ENCODE measurements at regions of chr5 and their contacts with region 1.

Region 1: DNA sequence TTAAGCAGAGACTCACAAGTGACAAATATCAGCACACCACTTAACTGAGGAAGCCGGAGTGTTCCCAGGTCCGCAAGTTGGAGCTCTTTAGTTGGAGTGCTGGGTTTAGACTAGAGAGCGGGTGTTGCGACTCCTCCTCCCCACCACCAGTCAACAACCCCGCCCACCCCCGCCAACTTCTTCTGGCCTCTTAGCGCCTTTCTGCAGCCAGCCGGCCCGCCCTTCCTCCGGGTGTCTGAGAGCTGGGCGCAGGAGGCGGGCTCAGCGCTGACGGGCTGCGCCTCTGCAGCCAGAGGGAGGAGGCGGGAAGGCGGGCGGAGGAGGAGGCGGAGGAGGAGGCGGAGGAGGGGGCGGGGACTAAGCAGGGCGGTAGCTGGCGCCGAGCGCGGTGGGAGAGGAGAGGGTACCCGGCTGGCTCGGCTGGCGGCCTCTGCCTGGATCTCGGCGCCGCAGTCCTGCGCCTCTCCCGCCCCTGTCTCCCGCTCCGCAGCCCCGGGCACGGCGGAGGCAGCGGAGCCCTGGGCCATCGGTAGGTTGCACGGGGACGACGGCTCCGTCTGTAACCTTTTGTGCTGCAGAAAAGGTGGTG is at the start of gene MACIR:
- DNase-seq: peak; percentile 90 to 94 (median 93)
- H3K4me3 ChIP-seq: peak within 1 kb of the TSS; percentile 34 to 79
- H3K4me3 Mint-ChIP-seq: peak within 1 kb of the TSS; percentile 85 to 97 (median 90)
- H3K27ac ChIP-seq: peak within 1 kb of the TSS; percentile 52
- H3K27ac Mint-ChIP-seq: peak within 1 kb of the TSS; percentile 77 to 93 (median 82)
- H3K4me1 ChIP-seq: peaks cover 13% of the 10 kb centered on the region
- H3K4me1 Mint-ChIP-seq: peaks cover 10 to 21% (median 15%) of the 10 kb centered on the region in 4 donors
- H3K27me3 ChIP-seq: no peaks in the 10 kb centered on the region
- H3K27me3 Mint-ChIP-seq: peaks cover 0 to 6% of the 10 kb centered on the region in 2 donors
- total RNA-seq, gene MACIR: 2.9 to 3.4 TPM

Region 2: GRCh38 chr5:102755686-102756371 is 502.6 kb before region 1 on chr5:
- CTCF ChIA-PET with region 1: no interaction called
- POLR2A ChIA-PET with region 1: interaction called, 4 read pairs
- intact Hi-C with region 1: loop called (anchors 5 kb)
- DNase-seq: peak; percentile 55 to 85 (median 60)
- H3K4me3 ChIP-seq: peak overlapping the region; percentile 12 to 77
- H3K4me3 Mint-ChIP-seq: peak overlapping the region; percentile 95 to 98 (median 96)
- H3K27ac ChIP-seq: peak overlapping the region; percentile 69
- H3K27ac Mint-ChIP-seq: peak overlapping the region; percentile 86 to 97 (median 95)
- H3K4me1 ChIP-seq: peaks cover 46% of the 10 kb centered on the region
- H3K4me1 Mint-ChIP-seq: peaks cover 33 to 60% (median 45%) of the 10 kb centered on the region in 4 donors
- H3K27me3 ChIP-seq: no peaks in the 10 kb centered on the region
- H3K27me3 Mint-ChIP-seq: peaks cover 2 to 3% of the 10 kb centered on the region in 2 donors

Region 3: GRCh38 chr5:103232393-103232999 is 26.0 kb before region 1 on chr5:
- CTCF ChIA-PET with region 1: interaction called, 7 read pairs
- POLR2A ChIA-PET with region 1: no interaction called
- intact Hi-C with region 1: loop called (anchors 1 kb)
- DNase-seq: peak in 4 of 5 donors; percentile 19 to 35 (median 33)
- H3K4me3 ChIP-seq: no peak overlapping the region
- H3K4me3 Mint-ChIP-seq: no peak overlapping the region
- H3K27ac ChIP-seq: no peak overlapping the region
- H3K27ac Mint-ChIP-seq: no peak overlapping the region
- H3K4me1 ChIP-seq: no peaks in the 10 kb centered on the region
- H3K4me1 Mint-ChIP-seq: no peaks in the 10 kb centered on the region
- H3K27me3 ChIP-seq: no peaks in the 10 kb centered on the region
- H3K27me3 Mint-ChIP-seq: peaks cover 8 to 9% of the 10 kb centered on the region in 2 donors